CD8-positive, alpha-beta T cell (primary cell): ENCODE measurements at regions of chr14 and their contacts with region 1.

Region 1: DNA sequence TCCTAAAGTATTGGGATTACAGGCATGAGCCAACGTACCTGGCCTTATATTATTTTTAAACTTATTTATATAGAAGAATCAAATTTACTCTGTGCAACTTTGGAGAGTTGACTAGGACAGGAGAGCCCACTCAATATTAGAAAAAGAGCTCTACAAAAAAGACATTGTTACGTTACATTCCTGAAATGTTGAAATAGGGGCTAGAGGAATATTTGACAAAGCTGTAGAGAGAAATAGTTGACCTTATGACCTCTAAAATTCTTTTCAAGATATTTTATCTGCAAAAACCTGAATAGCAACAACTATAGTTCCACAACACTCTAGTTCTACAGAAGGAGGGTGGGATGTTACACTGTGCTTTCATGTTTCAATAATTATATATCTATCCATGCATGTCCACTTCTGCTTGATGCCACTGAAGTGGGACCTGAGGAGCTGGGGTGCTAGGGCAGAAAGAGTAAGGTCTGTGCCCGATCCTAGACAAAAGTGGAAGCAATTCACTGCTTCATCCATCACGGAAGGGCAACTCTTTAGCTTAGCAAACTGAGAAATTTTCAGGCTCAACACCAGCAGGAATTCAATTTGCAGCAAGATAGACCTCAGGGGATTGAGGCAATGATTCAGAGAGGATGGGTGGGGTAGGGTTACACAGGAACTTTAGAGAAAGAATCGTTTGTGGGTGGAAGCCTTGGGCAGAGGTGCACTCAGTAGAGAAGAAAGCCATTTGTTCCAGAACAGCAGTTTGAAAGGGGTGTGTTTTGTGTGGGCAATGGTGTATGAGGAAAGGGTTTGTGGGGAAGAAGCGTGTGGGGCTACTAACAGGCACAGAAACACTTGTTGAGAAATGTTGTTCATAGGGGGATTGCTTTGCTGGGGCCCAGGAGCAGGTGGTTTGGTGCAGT is 16.0 kb upstream of the RNASE10 start:
- DNase-seq: peak in 4 of 9 experiments; percentile 17 to 56 (median 22)
- ATAC-seq: peak; percentile 82
- H3K4me3 ChIP-seq: peak overlapping the region in 1 of 2 experiments; percentile 2
- H3K4me3 Mint-ChIP-seq: peak overlapping the region; percentile 69
- H3K27ac ChIP-seq: peak overlapping the region in 1 of 2 experiments; percentile 28
- H3K27ac Mint-ChIP-seq: peak overlapping the region; percentile 86
- H3K4me1 ChIP-seq: peaks cover 52% of the 10 kb centered on the region
- H3K4me1 Mint-ChIP-seq: peaks cover 71% of the 10 kb centered on the region
- H3K27me3 ChIP-seq: no peaks in the 10 kb centered on the region
- H3K27me3 Mint-ChIP-seq: no peaks in the 10 kb centered on the region
- CTCF ChIP-seq: no peak

Region 2: DNA sequence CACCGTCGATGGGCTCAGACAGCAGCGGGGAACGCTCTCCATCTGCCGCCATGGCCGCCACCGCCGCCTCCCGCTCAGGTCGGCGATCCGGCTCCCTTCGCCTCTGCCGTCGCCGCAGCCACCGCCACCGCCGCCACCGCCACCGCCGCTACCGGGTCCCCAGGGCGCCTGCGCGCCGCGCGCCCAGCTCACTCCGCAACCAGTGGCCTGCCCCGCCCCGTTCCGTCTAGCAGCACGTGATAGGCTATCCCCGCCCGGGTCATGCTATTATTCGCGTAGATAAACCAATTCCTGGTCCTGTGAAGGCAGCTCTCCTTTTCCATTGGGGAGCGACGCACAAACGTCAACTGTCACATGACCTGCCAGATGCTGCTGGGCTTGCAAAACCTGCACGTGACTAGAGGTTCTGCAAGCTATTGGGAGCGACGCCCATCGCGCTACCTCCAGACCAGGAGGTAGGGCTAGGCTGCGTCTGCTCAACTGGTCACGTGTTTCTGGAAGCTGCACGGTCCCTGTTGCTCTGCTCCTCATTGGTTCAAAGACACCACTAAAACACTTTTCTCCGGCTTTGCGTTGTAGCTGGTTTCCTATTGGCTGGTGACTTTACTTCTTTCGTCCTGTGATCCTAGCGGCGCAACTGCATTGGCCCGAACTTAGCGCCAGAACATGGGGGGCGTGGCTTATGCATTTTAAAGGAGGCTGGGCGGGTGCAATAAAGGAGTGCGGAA is 27.9 kb before region 1 on chr14 and contains the start of gene PIP4P1:
- CTCF ChIA-PET with region 1: interaction called, 4 read pairs
- POLR2A ChIA-PET with region 1: interaction called, 5 read pairs
- intact Hi-C with region 1: loop called in 1 of 2 experiments (anchors 1 kb)
- DNase-seq: peak; percentile 95 to 100 (median 97)
- ATAC-seq: peak; percentile 85
- H3K4me3 ChIP-seq: peak within 1 kb of the TSS; percentile 72 to 85
- H3K4me3 Mint-ChIP-seq: peak within 1 kb of the TSS; percentile 92
- H3K27ac ChIP-seq: peak within 1 kb of the TSS; percentile 84 to 95
- H3K27ac Mint-ChIP-seq: peak within 1 kb of the TSS; percentile 96
- H3K4me1 ChIP-seq: peaks cover 26% of the 10 kb centered on the region
- H3K4me1 Mint-ChIP-seq: peaks cover 30% of the 10 kb centered on the region
- H3K27me3 ChIP-seq: no peaks in the 10 kb centered on the region
- H3K27me3 Mint-ChIP-seq: no peaks in the 10 kb centered on the region
- CTCF ChIP-seq: no peak
- total RNA-seq, gene PIP4P1: 87.7 to 105 TPM

Region 3: GRCh38 chr14:20469242-20469889 is 20.0 kb before region 1 on chr14 and contains the start of gene PNP:
- CTCF ChIA-PET with region 1: interaction called, 7 read pairs
- POLR2A ChIA-PET with region 1: interaction called, 6 read pairs
- intact Hi-C with region 1: loop called in 1 of 2 experiments (anchors 1 kb)
- DNase-seq: peak; percentile 74 to 93 (median 86)
- ATAC-seq: peak; percentile 85
- H3K4me3 ChIP-seq: peak within 1 kb of the TSS; percentile 91 to 93
- H3K4me3 Mint-ChIP-seq: peak within 1 kb of the TSS; percentile 98
- H3K27ac ChIP-seq: peak within 1 kb of the TSS; percentile 74 to 88
- H3K27ac Mint-ChIP-seq: peak within 1 kb of the TSS; percentile 97
- H3K4me1 ChIP-seq: peaks cover 35% of the 10 kb centered on the region
- H3K4me1 Mint-ChIP-seq: peaks cover 51% of the 10 kb centered on the region
- H3K27me3 ChIP-seq: no peaks in the 10 kb centered on the region
- H3K27me3 Mint-ChIP-seq: no peaks in the 10 kb centered on the region
- CTCF ChIP-seq: no peak
- total RNA-seq, gene PNP: 59.6 to 62.1 TPM

Region 4: DNA sequence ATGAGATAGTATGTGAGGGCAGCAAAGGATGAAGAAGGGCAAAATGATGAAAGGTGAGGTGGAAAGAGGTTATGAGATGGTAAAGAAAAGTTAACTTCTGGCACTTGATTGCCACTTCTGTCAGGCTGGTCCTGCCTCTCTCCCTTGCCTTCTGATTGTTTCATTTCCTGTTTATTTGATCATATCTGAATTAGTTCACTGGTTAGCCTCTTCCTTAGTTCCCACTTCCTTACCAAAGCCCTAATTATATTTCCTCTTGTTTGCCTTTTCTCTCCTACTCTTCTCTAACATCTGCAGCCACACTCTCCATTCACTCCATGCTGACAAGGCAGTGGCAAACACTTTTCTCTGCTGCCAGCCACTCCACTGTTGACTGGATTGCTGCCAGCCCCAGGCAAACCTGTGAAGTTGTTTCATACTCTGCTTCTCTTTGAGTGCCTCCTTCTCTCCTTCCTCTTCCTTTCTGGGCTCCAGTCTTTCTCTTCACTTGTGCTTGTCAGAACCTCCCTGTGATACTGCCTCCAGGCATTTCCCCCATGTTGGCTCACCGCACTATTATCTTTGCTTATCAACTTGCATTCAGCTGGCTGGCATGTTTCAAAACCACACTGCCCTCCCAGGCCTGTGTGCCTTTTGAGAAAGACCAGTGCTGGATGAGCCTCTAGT is 12.0 kb before region 1 on chr14:
- CTCF ChIA-PET with region 1: interaction called, 7 read pairs
- POLR2A ChIA-PET with region 1: interaction called, 11 read pairs
- intact Hi-C with region 1: loop called in 1 of 2 experiments (anchors 1 kb)
- DNase-seq: peak in 8 of 9 experiments; percentile 16 to 71 (median 44)
- ATAC-seq: peak; percentile 75
- H3K4me3 ChIP-seq: peak overlapping the region in 1 of 2 experiments; percentile 1
- H3K4me3 Mint-ChIP-seq: peak overlapping the region; percentile 65
- H3K27ac ChIP-seq: peak overlapping the region; percentile 41 to 79
- H3K27ac Mint-ChIP-seq: peak overlapping the region; percentile 92
- H3K4me1 ChIP-seq: peaks cover 66% of the 10 kb centered on the region
- H3K4me1 Mint-ChIP-seq: peaks cover 86% of the 10 kb centered on the region
- H3K27me3 ChIP-seq: no peaks in the 10 kb centered on the region
- H3K27me3 Mint-ChIP-seq: no peaks in the 10 kb centered on the region
- CTCF ChIP-seq: no peak

Region 5: DNA sequence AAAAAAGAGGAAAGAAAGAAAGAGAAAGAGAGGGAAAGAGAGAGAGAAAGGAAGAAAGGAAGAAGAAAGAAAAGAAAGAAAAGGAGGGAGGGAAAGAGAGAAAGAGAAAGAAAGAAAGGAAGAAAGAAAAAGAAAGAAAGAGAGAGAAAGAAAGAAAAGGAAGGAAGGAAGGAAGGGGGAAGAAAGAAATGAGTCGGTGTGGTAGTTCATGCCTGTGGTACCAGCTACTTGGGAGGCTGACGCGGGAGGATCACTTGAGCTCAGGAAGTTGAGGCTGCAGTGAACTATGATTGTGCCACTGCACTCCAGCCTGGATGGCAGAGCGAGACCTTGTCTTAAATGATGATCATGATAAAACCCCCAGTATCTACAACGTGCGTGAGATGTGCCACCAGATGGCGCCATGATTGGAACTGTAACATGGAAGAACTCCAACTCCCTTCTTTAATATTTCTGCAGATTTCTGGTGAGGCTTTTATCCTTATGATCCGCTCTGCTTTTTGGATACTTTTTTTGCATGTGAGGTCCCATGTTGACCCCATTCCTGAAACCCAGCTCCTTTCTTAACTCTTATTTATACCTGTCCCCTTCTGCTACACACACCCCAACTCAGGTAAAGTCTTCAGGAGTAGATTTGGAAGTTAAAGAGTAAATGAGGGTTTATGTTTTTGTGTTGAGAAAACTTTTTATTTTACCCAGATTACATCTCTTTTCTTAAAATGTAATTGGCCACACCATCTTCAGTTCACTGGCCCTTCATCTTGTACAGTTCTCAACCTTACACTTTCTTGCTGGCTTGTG is 41.6 kb after region 1 on chr14:
- CTCF ChIA-PET with region 1: interaction called, 5 read pairs
- POLR2A ChIA-PET with region 1: no interaction called
- intact Hi-C with region 1: loop called in 1 of 2 experiments (anchors 5 kb)
- DNase-seq: peak; percentile 37 to 83 (median 72)
- ATAC-seq: peak; percentile 76
- H3K4me3 ChIP-seq: no peak overlapping the region
- H3K4me3 Mint-ChIP-seq: peak overlapping the region; percentile 48
- H3K27ac ChIP-seq: no peak overlapping the region
- H3K27ac Mint-ChIP-seq: no peak overlapping the region
- H3K4me1 ChIP-seq: no peaks in the 10 kb centered on the region
- H3K4me1 Mint-ChIP-seq: peaks cover 7% of the 10 kb centered on the region
- H3K27me3 ChIP-seq: peaks cover 0 to 2% of the 10 kb centered on the region in 2 experiments
- H3K27me3 Mint-ChIP-seq: peaks cover 8% of the 10 kb centered on the region
- CTCF ChIP-seq: peak; percentile 79